GM12878 (cell line): ENCODE measurements at regions of chr13 and their contacts with region 1.

Region 1: GRCh38 chr13:52665325-52665724 is 12.7 kb downstream of the SUGT1 start:
- DNase-seq: no peak
- ATAC-seq: peak; percentile 34
- H3K4me3 ChIP-seq: no peak overlapping the region
- H3K27ac ChIP-seq: no peak overlapping the region
- H3K4me1 ChIP-seq: peaks cover 3% of the 10 kb centered on the region; the same call in 1 of the 2 replicates
- H3K27me3 ChIP-seq: no peaks in the 10 kb centered on the region
- CTCF ChIP-seq: peak; percentile 38 to 53 (median 52); a peak in 4 of 6 replicates
- EP300 ChIP-seq: no peak
- POLR2A ChIP-seq: no peak
- RAD21 ChIP-seq: peak; percentile 60

Region 2: GRCh38 chr13:52652196-52652979 is 12.9 kb before region 1 on chr13 and contains the start of gene SUGT1:
- CTCF ChIA-PET with region 1: interaction called, 34 read pairs
- POLR2A ChIA-PET with region 1: interaction called, 3 read pairs
- RAD21 ChIA-PET with region 1: interaction called, 27 read pairs
- SMC1A ChIA-PET with region 1: interaction called, 41 read pairs
- in situ Hi-C with region 1: no loop called
- intact Hi-C with region 1: no loop called
- DNase-seq: peak; percentile 92
- ATAC-seq: peak; percentile 96
- H3K4me3 ChIP-seq: peak within 1 kb of the TSS; percentile 79
- H3K27ac ChIP-seq: peak within 1 kb of the TSS; percentile 94
- H3K4me1 ChIP-seq: no peaks in the 10 kb centered on the region; the same call in 1 of the 2 replicates
- H3K27me3 ChIP-seq: no peaks in the 10 kb centered on the region
- CTCF ChIP-seq: peak; percentile 55 to 81 (median 73)
- EP300 ChIP-seq: no peak
- POLR2A ChIP-seq: peak; percentile 79
- RAD21 ChIP-seq: no peak
- polyA plus RNA-seq, gene SUGT1: 82.5 to 85.6 TPM

Region 3: DNA sequence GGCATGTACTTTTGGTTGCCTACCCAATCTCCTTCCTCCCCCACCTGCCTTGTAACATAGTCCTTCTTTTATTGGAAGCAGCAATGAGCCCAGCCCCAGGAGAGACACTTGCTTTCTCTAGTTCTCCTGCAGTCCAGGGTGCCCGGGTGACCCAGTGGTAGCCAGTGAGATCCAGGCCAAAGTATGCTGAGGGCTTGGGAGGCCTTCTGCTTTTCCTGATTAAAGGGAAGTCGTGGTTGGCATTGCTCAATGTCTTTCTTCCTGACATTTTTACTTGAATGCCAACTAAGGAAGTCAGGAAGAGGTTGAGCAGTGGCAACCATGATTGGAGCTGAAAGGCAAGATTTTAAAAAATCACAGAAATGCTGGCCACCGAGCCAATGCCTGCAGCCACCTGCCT is 48.6 kb after region 1 on chr13:
- CTCF ChIA-PET with region 1: interaction called, 11 read pairs
- POLR2A ChIA-PET with region 1: no interaction called
- RAD21 ChIA-PET with region 1: interaction called, 4 read pairs
- SMC1A ChIA-PET with region 1: interaction called, 12 read pairs
- in situ Hi-C with region 1: no loop called
- intact Hi-C with region 1: no loop called
- DNase-seq: no peak
- ATAC-seq: no peak
- H3K4me3 ChIP-seq: no peak overlapping the region
- H3K27ac ChIP-seq: no peak overlapping the region
- H3K4me1 ChIP-seq: no peaks in the 10 kb centered on the region
- H3K27me3 ChIP-seq: no peaks in the 10 kb centered on the region
- CTCF ChIP-seq: no peak
- EP300 ChIP-seq: no peak
- POLR2A ChIP-seq: no peak
- RAD21 ChIP-seq: no peak

Region 4: GRCh38 chr13:52804202-52804641 is 138.9 kb after region 1 on chr13:
- CTCF ChIA-PET with region 1: interaction called, 179 read pairs
- POLR2A ChIA-PET with region 1: interaction called, 8 read pairs
- RAD21 ChIA-PET with region 1: interaction called, 147 read pairs
- SMC1A ChIA-PET with region 1: interaction called, 129 read pairs
- in situ Hi-C with region 1: loop called (anchors 5 kb)
- intact Hi-C with region 1: loop called (anchors 1 kb)
- DNase-seq: no peak
- ATAC-seq: no peak
- H3K4me3 ChIP-seq: no peak overlapping the region
- H3K27ac ChIP-seq: no peak overlapping the region
- H3K4me1 ChIP-seq: no peaks in the 10 kb centered on the region
- H3K27me3 ChIP-seq: peaks cover 0 to under 1% of the 10 kb centered on the region in 2 experiments; a peak in 1 of 4 replicates
- CTCF ChIP-seq: no peak
- EP300 ChIP-seq: no peak
- POLR2A ChIP-seq: no peak
- RAD21 ChIP-seq: no peak

Region 5: GRCh38 chr13:52950436-52950956 is 285.2 kb after region 1 on chr13:
- CTCF ChIA-PET with region 1: no interaction called
- POLR2A ChIA-PET with region 1: no interaction called
- RAD21 ChIA-PET with region 1: no interaction called
- SMC1A ChIA-PET with region 1: no interaction called
- in situ Hi-C with region 1: no loop called
- intact Hi-C with region 1: no loop called
- DNase-seq: no peak
- ATAC-seq: no peak
- H3K4me3 ChIP-seq: no peak overlapping the region
- H3K27ac ChIP-seq: no peak overlapping the region
- H3K4me1 ChIP-seq: no peaks in the 10 kb centered on the region
- H3K27me3 ChIP-seq: no peaks in the 10 kb centered on the region
- CTCF ChIP-seq: no peak
- EP300 ChIP-seq: no peak
- POLR2A ChIP-seq: no peak
- RAD21 ChIP-seq: no peak